ENCODE measurements at regions of chr17 and their contacts with region 1.

Region 1: GRCh38 chr17:53420035-53420641 is 402.6 kb upstream of the KIF2B start:
- DNase-seq: no peak
- H3K4me3 ChIP-seq: no peak overlapping the region
- H3K27ac ChIP-seq: no peak overlapping the region
- H3K4me1 ChIP-seq: no peaks in the 10 kb centered on the region
- H3K27me3 ChIP-seq: no peaks in the 10 kb centered on the region
- CTCF ChIP-seq: no peak

Region 2: DNA sequence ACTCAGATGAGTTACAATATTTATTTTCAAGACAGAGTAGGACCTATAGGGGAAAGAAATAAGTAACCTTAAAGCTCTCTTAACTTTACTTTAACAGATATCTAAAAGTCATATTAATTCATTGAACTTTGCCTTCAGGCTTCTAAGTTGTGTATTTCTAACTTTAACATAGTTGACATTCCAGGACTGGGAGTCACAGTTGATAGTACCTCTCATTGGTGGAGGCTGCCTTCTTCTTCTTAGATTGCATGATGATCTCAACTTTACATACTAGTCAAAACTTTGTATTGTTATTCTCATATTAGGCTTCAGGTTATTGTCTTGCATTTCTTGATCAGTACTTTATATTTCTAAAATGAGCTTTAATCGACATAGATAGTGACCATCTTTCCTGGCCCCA is 52.4 kb after region 1 on chr17:
- intact Hi-C with region 1: loop called (anchors 10 kb)
- DNase-seq: no peak
- H3K4me3 ChIP-seq: no peak overlapping the region
- H3K27ac ChIP-seq: no peak overlapping the region
- H3K4me1 ChIP-seq: no peaks in the 10 kb centered on the region
- H3K27me3 ChIP-seq: no peaks in the 10 kb centered on the region
- CTCF ChIP-seq: no peak

Region 3: DNA sequence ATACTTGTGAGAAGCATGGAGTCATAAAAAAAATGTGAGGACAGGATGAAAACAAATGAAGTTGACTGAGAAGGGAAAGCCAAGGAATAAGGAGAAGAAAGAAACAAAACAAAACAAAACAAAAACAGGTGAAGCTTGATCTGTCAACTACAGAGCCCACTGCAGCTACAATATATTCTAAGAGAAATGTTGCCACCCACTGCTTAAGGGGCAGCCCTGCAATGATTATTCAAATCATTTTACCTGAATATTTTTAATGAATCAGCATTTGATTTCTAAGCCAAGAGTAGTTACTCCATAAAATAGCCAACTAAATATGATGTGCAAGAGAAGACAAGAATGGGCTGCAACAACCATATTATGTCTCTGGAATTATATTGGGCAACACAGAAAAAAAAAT is 150.6 kb after region 1 on chr17:
- intact Hi-C with region 1: no loop called
- DNase-seq: no peak
- H3K4me3 ChIP-seq: no peak overlapping the region
- H3K27ac ChIP-seq: no peak overlapping the region
- H3K4me1 ChIP-seq: no peaks in the 10 kb centered on the region
- H3K27me3 ChIP-seq: no peaks in the 10 kb centered on the region
- CTCF ChIP-seq: no peak